ENCODE measurements at regions of chr1 and their contacts with region 1.

Region 1: DNA sequence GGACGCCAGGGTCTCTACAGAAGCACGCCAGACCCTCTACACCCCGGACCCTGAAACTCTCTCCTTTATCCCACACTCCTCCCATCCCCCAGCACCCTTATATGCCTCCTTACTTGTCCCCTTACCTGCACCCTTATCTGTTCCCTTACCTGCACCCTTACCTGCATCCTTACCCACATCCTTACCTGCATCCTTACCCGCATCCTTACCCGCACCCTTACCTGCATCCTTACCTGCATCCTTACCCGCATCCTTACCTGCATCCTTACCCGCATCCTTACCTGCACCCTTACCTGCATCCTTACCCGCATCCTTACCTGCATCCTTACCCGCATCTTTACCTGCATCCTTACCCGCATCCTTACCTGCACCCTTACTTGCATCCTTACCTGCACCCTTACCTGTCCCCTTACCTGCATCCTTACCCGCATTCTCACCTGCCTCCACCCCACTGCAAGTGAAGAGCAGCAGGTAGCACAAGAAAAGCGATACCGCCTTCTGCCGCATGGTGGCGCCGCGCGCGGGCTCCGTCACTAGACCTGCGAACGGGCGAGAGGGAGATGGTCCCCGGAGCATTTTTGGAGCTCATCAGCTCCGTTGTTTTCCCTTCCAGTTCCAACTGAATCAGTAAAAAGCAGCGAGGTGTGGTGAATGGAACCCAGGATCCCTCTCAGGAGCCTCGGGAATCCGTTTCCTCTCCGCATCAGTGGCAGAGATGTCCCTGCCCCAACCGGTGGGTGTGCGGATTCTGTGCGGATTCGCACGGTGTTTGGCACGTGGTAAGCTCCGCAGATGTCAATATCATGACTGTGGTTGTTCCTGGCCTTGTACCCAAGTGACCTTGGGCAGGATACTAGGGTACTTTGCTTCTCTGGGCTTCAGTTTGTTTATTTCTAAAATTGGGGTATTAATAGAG is 2.9 kb downstream of the IFI6 start:
- DNase-seq: peak; percentile 55 to 58
- ATAC-seq: peak; percentile 42 to 59; a peak in 3 of 6 replicates
- H3K4me3 ChIP-seq: peak overlapping the region; percentile 38
- H3K27ac ChIP-seq: peak overlapping the region in 1 of 2 experiments; percentile 57; a peak in 2 of 6 replicates
- H3K4me1 ChIP-seq: peaks cover 22% of the 10 kb centered on the region; the same call in 1 of the 3 replicates
- CTCF ChIP-seq: peak; percentile 73
- EP300 ChIP-seq: no peak
- POLR2A ChIP-seq: no peak
- RAD21 ChIP-seq: peak; percentile 44 to 60; a peak in 4 of 5 replicates

Region 2: GRCh38 chr1:27630859-27631491 is 38.1 kb before region 1 on chr1:
- CTCF ChIA-PET with region 1: interaction called, 14 read pairs
- POLR2A ChIA-PET with region 1: no interaction called
- DNase-seq: no peak
- ATAC-seq: no peak
- H3K4me3 ChIP-seq: no peak overlapping the region
- H3K27ac ChIP-seq: no peak overlapping the region
- H3K4me1 ChIP-seq: no peaks in the 10 kb centered on the region
- CTCF ChIP-seq: no peak
- EP300 ChIP-seq: no peak
- POLR2A ChIP-seq: no peak
- RAD21 ChIP-seq: no peak

Region 3: DNA sequence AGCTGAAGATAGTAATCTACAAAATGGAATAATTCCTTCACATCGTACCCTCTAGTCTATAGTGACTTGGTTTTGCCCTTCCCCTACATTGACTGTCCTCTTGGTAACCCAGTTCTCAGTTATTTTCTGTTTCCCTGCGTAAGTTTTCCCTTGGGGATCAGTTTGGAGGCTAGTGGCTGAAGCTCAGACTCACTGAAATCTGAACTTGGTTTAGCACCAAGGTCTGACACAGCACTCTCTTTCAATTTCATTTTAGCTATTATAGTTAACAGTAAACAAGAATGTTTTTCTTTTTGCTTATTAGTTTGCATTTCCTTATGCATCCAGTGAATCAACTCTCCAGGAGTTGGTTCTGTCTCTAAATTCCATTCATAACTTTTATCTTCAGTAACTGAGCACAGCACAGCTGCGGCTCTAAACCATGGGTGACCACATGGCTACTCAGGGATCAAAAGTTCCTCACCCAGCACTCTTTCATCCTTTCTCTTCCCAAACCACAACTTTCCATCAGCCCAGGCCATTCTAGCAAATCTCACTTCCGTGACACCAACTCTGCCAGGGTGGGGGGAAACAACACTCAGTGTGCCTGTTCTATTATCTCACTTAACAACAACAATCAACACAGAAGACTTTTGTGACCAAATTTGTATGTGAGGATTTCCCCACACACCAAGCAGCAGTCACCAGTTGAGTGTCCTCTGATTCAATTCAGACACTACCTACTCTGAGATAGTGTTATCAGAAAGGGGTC is 20.5 kb after region 1 on chr1:
- CTCF ChIA-PET with region 1: interaction called, 20 read pairs
- POLR2A ChIA-PET with region 1: no interaction called
- DNase-seq: no peak
- ATAC-seq: no peak
- H3K4me3 ChIP-seq: no peak overlapping the region
- H3K27ac ChIP-seq: no peak overlapping the region
- H3K4me1 ChIP-seq: no peaks in the 10 kb centered on the region
- CTCF ChIP-seq: no peak
- EP300 ChIP-seq: no peak
- POLR2A ChIP-seq: no peak
- RAD21 ChIP-seq: no peak

Measured in A549 (cell line).